ENCODE measurements at regions of chr1 and their contacts with region 1.

Region 1: GRCh38 chr1:109493805-109494539 is at the start of gene CYB561D1:
- DNase-seq: peak; percentile 91
- H3K4me3 ChIP-seq: peak within 1 kb of the TSS; percentile 79 to 94 (median 80)
- H3K27ac ChIP-seq: peak within 1 kb of the TSS; percentile 42
- H3K4me1 ChIP-seq: peaks cover 18% of the 10 kb centered on the region
- H3K27me3 ChIP-seq: no peaks in the 10 kb centered on the region
- CTCF ChIP-seq: peak; percentile 98 to 99
- POLR2A ChIP-seq: peak; percentile 76
- total RNA-seq, gene CYB561D1: 6.9 and 7.3 TPM in 2 replicates

Region 2: GRCh38 chr1:109361649-109362048 is 132.3 kb before region 1 on chr1:
- CTCF ChIA-PET with region 1: no interaction called
- POLR2A ChIA-PET with region 1: no interaction called
- dilution Hi-C with region 1: no loop called
- intact Hi-C with region 1: no loop called
- DNase-seq: no peak
- H3K4me3 ChIP-seq: no peak overlapping the region
- H3K27ac ChIP-seq: no peak overlapping the region
- H3K4me1 ChIP-seq: no peaks in the 10 kb centered on the region
- H3K27me3 ChIP-seq: peaks cover 4 to 13% of the 10 kb centered on the region in 2 experiments
- CTCF ChIP-seq: no peak
- POLR2A ChIP-seq: no peak

Region 3: DNA sequence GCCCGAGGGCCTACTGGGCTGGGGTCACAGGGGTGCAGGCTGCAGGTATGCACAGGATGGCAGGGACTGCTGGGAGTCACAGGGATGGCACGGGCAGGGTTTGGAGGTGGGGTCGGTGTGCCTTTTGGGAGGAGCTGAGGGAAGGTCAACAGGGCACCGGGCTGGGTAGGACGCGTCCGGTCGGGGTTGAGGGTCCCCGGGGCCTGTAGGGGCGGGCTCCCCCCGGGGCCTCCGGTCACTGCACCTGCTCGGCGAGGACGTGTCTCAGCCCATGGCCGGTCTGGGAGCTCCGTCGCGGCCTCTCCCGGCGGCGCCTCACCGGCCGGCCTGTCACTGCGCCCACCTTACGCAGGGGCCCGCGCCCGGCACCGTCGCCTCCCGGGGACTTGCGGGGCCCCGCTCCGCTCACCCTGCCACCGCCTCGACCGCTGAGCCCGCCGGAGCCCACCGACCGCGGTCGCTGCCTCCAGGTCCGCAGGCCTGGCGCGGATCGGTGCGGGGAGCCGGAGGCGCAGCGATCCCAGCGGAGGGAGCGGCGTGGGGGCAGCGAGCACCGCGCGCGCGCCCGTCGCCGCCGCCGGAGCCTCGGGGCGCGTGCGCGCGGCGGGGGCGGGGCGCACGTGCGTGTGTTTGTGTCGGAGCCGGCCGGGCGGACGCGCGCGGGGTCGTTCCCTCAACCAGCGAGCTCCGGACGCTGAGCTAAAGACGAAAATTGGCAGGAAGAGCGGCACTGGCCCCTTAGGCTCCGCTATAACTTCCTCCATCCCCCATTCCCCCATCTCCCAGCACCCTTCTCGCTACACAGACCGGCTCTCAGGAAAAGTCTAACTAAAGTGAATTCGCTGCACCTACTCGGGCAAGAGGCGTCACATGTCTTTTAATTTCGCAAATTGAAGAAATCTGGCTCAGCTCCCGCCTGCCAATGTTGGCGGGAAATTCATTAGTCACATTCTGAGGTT is 15.5 kb after region 1 on chr1 and contains the start of gene AMIGO1:
- CTCF ChIA-PET with region 1: interaction called, 19 read pairs
- POLR2A ChIA-PET with region 1: no interaction called
- dilution Hi-C with region 1: no loop called
- intact Hi-C with region 1: no loop called
- DNase-seq: peak; percentile 54
- H3K4me3 ChIP-seq: peak within 1 kb of the TSS; percentile 42 to 49 (median 47)
- H3K27ac ChIP-seq: no peak within 1 kb of the TSS
- H3K4me1 ChIP-seq: peaks cover 6% of the 10 kb centered on the region
- H3K27me3 ChIP-seq: peaks cover 10 to 21% of the 10 kb centered on the region in 2 experiments
- CTCF ChIP-seq: no peak
- POLR2A ChIP-seq: no peak
- total RNA-seq, gene AMIGO1: 0.78 and 0.88 TPM in 2 replicates

Region 4: GRCh38 chr1:109516872-109517271 is 22.9 kb after region 1 on chr1:
- CTCF ChIA-PET with region 1: interaction called, 11 read pairs
- POLR2A ChIA-PET with region 1: no interaction called
- dilution Hi-C with region 1: no loop called
- intact Hi-C with region 1: no loop called
- DNase-seq: no peak
- H3K4me3 ChIP-seq: no peak overlapping the region
- H3K27ac ChIP-seq: no peak overlapping the region
- H3K4me1 ChIP-seq: no peaks in the 10 kb centered on the region
- H3K27me3 ChIP-seq: peaks cover 5 to 16% of the 10 kb centered on the region in 2 experiments
- CTCF ChIP-seq: no peak
- POLR2A ChIP-seq: no peak

Region 5: DNA sequence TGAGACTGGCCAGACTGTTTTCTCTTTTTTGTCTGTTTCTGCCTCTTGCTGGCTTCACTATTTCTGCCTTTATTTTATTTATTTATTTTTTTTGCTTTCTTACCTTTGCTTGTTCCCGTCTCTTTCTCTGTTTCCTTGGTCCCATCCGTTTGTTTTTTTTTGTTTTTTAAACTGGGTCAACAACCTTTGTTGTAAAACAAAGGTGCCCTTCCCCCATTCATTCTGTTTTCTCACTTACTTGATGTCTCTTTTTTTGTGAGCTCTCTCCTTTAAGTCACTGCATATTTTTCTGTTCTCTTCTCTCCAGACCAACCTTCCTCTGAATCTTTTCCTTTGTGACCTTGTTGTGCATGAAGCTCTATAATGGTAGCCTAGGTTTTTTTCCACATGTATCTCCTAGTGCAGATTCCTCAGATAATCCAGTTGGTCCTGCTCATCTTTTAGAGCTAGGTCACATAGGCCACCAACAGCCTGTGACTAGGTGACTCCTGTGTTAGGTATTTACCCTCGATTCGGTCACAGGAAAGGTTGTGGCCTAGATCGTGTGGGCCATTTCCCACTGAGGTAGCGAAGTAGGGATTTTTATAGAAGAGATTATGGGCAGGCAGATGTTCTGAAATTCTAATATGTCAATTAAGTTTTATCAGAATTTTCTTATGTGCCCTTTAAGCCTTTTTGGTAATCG is 70.4 kb after region 1 on chr1:
- CTCF ChIA-PET with region 1: no interaction called
- POLR2A ChIA-PET with region 1: no interaction called
- dilution Hi-C with region 1: no loop called
- intact Hi-C with region 1: no loop called
- DNase-seq: no peak
- H3K4me3 ChIP-seq: no peak overlapping the region
- H3K27ac ChIP-seq: no peak overlapping the region
- H3K4me1 ChIP-seq: peaks cover 11% of the 10 kb centered on the region
- H3K27me3 ChIP-seq: no peaks in the 10 kb centered on the region
- CTCF ChIP-seq: no peak
- POLR2A ChIP-seq: no peak